Dendritic cell treated with granulocyte-macrophage colony-stimulating factor and Interleukin-4, amounts not matched to agents 40 ng/mL and 50 ng/mL, for 4 days (primary cell): ENCODE measurements at regions of chr13 and their contacts with region 1.

Region 1: DNA sequence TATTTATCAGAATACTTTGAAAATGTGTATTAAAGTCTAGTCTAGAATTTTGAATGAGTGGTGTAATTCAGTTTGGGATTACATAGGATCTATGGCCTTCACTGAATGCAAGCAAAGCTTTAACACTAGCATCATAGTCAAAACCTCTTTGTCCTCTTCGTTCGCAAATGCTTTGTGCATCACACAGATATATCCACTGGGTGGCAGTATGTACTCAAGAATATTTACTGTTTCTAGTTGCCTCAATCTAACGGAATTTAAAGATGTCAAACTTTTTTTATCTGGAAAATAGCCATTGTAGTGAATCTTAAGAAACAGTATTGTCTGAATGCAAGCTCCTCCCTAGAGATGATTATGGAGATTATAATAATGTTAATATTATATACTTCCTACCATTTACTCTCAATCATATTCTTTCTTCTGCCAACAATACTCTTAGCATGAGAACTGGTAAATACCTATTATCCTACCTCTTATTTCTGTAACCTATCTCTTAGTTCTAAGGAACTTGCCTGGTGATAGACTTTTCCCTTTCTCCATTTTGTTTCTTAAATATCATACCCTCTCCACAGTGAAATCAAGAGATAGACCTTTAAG is 25.8 kb downstream of the LACC1 start:
- H3K4me3 Mint-ChIP-seq: no peak overlapping the region
- H3K27ac Mint-ChIP-seq: no peak overlapping the region
- H3K4me1 Mint-ChIP-seq: no peaks in the 10 kb centered on the region
- H3K27me3 Mint-ChIP-seq: peaks cover 63% of the 10 kb centered on the region

Region 2: DNA sequence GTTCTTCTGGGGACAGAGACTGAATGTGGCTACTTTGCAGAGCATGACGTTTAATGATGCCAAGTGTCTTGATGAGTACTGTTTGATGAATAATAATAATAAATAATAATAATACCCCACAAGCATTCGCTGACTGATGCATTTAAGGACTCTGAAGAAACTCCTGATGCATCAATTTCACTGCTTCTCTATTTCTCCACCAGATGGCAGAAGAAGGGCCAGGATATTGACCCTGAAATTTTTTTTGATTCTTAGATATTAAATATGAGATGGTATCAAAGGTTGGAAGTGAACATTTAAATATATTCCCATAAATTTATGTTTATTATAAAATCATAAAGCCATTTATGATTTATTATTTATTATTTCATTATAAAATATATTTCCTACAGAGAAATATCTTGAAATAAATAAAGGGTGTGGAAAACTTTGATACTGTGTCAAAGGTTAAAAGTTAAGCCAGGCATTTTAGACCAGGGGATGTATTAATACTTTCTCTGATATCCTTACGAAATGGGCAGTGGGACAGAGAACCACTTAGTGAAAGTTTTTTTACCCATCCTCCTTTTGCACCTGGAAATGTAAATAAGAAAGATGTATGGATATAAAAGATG is 145.0 kb after region 1 on chr13:
- intact Hi-C with region 1: loop called (anchors 2 kb)
- H3K4me3 Mint-ChIP-seq: no peak overlapping the region
- H3K27ac Mint-ChIP-seq: no peak overlapping the region
- H3K4me1 Mint-ChIP-seq: peaks cover 4% of the 10 kb centered on the region
- H3K27me3 Mint-ChIP-seq: peaks cover 48% of the 10 kb centered on the region

Region 3: DNA sequence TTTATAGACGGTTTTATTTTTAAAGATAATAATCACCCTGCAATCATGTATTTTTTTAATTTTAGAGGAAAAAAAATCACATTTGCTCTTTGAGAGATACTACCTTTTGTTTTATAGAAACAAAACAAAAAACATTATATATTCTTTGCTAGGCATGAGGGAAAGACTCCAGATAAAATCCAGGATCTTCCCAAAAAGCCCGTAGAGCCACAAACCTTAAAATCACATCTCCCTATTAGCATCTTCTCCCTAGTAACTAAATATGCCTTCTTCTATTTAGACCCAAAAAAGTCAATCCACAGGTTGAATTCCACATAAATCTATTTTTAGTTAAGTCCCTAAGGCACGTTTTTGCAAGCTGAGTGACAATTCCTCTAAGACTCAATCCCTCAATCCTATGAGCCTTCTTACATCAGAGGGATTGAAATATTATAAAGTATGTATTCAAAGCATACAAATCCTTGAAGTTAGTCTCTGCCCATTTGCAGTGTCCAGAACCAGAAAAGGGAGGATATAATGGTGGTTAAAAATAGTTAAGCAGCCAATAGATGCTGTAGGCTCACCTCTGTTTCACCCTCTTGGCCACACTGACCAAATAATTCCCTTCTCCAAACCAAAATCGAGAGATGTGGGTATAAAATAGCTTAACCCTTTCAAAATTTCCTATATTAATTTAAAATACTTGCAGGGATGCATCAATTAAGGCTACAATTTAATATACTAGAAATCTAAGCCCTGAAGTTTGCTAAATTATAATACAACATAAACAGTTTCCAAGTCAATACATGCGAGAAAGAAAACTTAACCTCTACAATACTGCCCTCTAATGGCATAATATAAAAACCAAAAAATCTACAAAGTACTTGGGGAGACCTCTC is 532.1 kb after region 1 on chr13:
- intact Hi-C with region 1: loop called (anchors 1 kb)
- H3K4me3 Mint-ChIP-seq: no peak overlapping the region
- H3K27ac Mint-ChIP-seq: no peak overlapping the region
- H3K4me1 Mint-ChIP-seq: peaks cover 28% of the 10 kb centered on the region
- H3K27me3 Mint-ChIP-seq: peaks cover 52% of the 10 kb centered on the region

Region 4: GRCh38 chr13:44470638-44471562 is 565.4 kb after region 1 on chr13:
- intact Hi-C with region 1: loop called (anchors 2 kb)
- H3K4me3 Mint-ChIP-seq: no peak overlapping the region
- H3K27ac Mint-ChIP-seq: no peak overlapping the region
- H3K4me1 Mint-ChIP-seq: no peaks in the 10 kb centered on the region
- H3K27me3 Mint-ChIP-seq: peaks cover 2% of the 10 kb centered on the region